ENCODE measurements at regions of chr10 and their contacts with region 1.

Region 1: GRCh38 chr10:34341473-34341872 is 473.6 kb downstream of the PARD3 start:
- DNase-seq: no peak
- H3K4me3 ChIP-seq: no peak overlapping the region
- H3K27ac ChIP-seq: no peak overlapping the region
- H3K4me1 ChIP-seq: peaks cover 46% of the 10 kb centered on the region
- H3K27me3 ChIP-seq: no peaks in the 10 kb centered on the region
- CTCF ChIP-seq: no peak
- POLR2A ChIP-seq: no peak

Region 2: DNA sequence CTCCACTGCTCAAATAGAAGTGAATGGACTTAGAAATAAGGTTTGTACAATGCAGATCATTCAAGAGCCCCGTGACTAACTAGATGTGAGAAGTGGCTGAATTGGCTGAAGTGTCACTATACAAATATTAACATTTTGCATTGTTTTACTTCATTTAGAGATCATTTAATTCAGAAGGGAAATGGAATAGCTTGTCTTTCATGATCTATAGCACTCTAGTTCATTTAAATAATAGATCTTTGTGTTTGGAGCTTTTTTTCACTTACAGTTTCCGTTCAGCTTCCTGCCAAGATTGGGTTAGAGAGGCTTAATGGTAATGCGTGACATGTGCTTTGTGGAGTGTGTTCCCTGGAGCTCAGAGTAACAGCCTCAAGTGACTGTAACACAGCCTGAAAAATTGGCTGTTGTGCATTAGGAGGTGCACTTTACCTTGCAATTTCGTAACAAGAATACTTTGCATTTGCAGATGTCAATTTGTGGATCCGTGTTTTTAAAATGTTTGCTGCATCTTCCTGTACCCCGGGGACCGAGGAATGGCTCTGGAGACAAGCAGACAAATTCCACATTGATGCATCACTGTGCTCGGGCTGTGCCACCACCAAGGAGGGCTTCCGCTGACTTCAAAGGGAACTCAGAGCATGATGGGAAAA is 1177.3 kb before region 1 on chr10:
- CTCF ChIA-PET with region 1: no interaction called
- POLR2A ChIA-PET with region 1: no interaction called
- dilution Hi-C with region 1: no loop called
- intact Hi-C with region 1: no loop called
- DNase-seq: peak; percentile 54
- H3K4me3 ChIP-seq: no peak overlapping the region
- H3K27ac ChIP-seq: peak overlapping the region; percentile 16
- H3K4me1 ChIP-seq: peaks cover 21% of the 10 kb centered on the region
- H3K27me3 ChIP-seq: no peaks in the 10 kb centered on the region
- CTCF ChIP-seq: no peak
- POLR2A ChIP-seq: no peak

Region 3: DNA sequence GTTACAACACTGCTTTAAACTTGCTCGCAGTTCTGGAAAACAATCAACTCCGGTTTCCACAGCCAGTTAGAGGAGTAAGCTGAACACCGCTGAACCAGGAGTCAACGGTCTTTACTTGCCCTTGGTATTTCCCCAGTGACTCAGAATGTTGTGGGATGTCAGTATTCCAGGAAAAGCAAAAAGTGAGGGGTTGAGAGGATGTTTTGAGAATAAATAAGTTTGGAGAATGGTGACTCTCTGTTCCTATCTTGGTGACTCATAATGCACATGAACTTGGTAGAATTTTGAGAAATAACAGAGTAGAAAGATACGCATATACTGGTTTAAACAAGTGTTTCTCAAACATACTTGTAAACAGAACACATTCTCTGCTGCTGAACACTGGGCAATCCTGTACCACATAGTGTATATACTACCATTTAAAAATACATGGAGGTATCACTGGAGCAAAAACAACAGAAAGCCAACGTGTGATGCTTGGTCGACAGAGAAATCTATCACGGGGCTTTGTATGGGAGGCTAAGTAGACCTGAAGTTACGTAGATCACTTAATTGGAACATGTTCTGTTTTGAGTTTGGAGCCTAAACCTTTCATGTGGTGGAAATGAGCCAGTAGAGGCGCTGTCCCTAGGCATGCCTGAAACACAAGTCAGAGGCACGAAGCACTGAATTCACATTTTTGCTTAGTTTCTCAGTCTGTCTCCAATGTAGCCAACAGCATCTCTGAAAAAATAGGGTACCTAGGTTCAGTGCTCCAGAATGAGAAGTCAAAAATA is 60.7 kb before region 1 on chr10:
- CTCF ChIA-PET with region 1: no interaction called
- POLR2A ChIA-PET with region 1: no interaction called
- dilution Hi-C with region 1: no loop called
- intact Hi-C with region 1: loop called (anchors 5 kb)
- DNase-seq: peak; percentile 93
- H3K4me3 ChIP-seq: no peak overlapping the region
- H3K27ac ChIP-seq: peak overlapping the region; percentile 65
- H3K4me1 ChIP-seq: peaks cover 23% of the 10 kb centered on the region
- H3K27me3 ChIP-seq: no peaks in the 10 kb centered on the region
- CTCF ChIP-seq: no peak
- POLR2A ChIP-seq: no peak

Region 4: GRCh38 chr10:34323192-34323591 is 18.3 kb before region 1 on chr10:
- CTCF ChIA-PET with region 1: interaction called, 3 read pairs
- POLR2A ChIA-PET with region 1: no interaction called
- dilution Hi-C with region 1: no loop called
- intact Hi-C with region 1: loop called (anchors 2 kb)
- DNase-seq: peak; percentile 67
- H3K4me3 ChIP-seq: no peak overlapping the region
- H3K27ac ChIP-seq: no peak overlapping the region
- H3K4me1 ChIP-seq: peaks cover 6% of the 10 kb centered on the region
- H3K27me3 ChIP-seq: no peaks in the 10 kb centered on the region
- CTCF ChIP-seq: no peak
- POLR2A ChIP-seq: no peak

Region 5: GRCh38 chr10:34528320-34528719 is 186.8 kb after region 1 on chr10:
- CTCF ChIA-PET with region 1: no interaction called
- POLR2A ChIA-PET with region 1: no interaction called
- dilution Hi-C with region 1: no loop called
- intact Hi-C with region 1: loop called (anchors 5 kb)
- DNase-seq: peak; percentile 83
- H3K4me3 ChIP-seq: no peak overlapping the region
- H3K27ac ChIP-seq: peak overlapping the region; percentile 89
- H3K4me1 ChIP-seq: peaks cover 30% of the 10 kb centered on the region
- H3K27me3 ChIP-seq: no peaks in the 10 kb centered on the region
- CTCF ChIP-seq: no peak
- POLR2A ChIP-seq: no peak